Activated B cell treated with CpG ODN at 0.5 μM for 24 hours (primary cell): ENCODE measurements at regions of chr9 and their contacts with region 1.

Region 1: GRCh38 chr9:132877824-132878694 is at the start of gene AK8:
- DNase-seq: peak; percentile 87
- ATAC-seq: peak; percentile 85
- H3K4me3 Mint-ChIP-seq: peak within 1 kb of the TSS; percentile 82
- H3K27ac Mint-ChIP-seq: peak within 1 kb of the TSS; percentile 70
- H3K4me1 Mint-ChIP-seq: peaks cover 17% of the 10 kb centered on the region
- H3K27me3 Mint-ChIP-seq: no peaks in the 10 kb centered on the region
- CTCF ChIP-seq: no peak
- total RNA-seq, gene AK8: 0.93 and 1.0 TPM in 2 replicates

Region 2: GRCh38 chr9:132849185-132849706 is 28.8 kb before region 1 on chr9:
- CTCF ChIA-PET with region 1: interaction called, 4 read pairs
- POLR2A ChIA-PET with region 1: no interaction called
- intact Hi-C with region 1: loop called (anchors 1 kb)
- DNase-seq: no peak
- ATAC-seq: no peak
- H3K4me3 Mint-ChIP-seq: peak overlapping the region; percentile 68
- H3K27ac Mint-ChIP-seq: peak overlapping the region; percentile 75
- H3K4me1 Mint-ChIP-seq: peaks cover 32% of the 10 kb centered on the region
- H3K27me3 Mint-ChIP-seq: no peaks in the 10 kb centered on the region
- CTCF ChIP-seq: no peak

Region 3: DNA sequence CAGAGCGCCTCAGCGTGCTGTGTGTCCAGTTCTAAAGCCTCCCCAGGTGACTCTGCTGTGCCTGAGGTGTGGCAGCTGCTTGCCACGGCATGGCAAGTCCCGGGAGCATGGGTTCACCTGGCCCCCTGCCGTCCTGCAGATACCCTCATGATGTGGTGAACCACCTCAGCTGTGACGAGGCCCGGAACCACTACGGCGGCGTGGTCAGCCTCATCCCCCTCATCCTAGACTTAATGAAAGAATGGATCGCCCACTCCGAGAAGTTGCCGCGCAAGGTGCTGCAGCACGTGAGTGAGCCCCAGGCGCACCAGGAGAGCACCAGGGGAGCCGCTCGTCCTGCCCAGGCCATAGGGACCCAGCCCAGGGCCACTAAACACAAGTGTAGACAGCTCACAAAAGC is 10.1 kb after region 1 on chr9:
- CTCF ChIA-PET with region 1: no interaction called
- POLR2A ChIA-PET with region 1: interaction called, 18 read pairs
- intact Hi-C with region 1: loop called (anchors 1 kb)
- DNase-seq: no peak
- ATAC-seq: peak; percentile 30
- H3K4me3 Mint-ChIP-seq: no peak overlapping the region
- H3K27ac Mint-ChIP-seq: peak overlapping the region; percentile 92
- H3K4me1 Mint-ChIP-seq: peaks cover 50% of the 10 kb centered on the region
- H3K27me3 Mint-ChIP-seq: no peaks in the 10 kb centered on the region
- CTCF ChIP-seq: no peak

Region 4: GRCh38 chr9:132901856-132902831 is 24.1 kb after region 1 on chr9:
- CTCF ChIA-PET with region 1: interaction called, 13 read pairs
- POLR2A ChIA-PET with region 1: no interaction called
- intact Hi-C with region 1: no loop called
- DNase-seq: peak; percentile 57
- ATAC-seq: peak; percentile 98
- H3K4me3 Mint-ChIP-seq: no peak overlapping the region
- H3K27ac Mint-ChIP-seq: no peak overlapping the region
- H3K4me1 Mint-ChIP-seq: peaks cover 5% of the 10 kb centered on the region
- H3K27me3 Mint-ChIP-seq: no peaks in the 10 kb centered on the region
- CTCF ChIP-seq: peak; percentile 54

Region 5: GRCh38 chr9:132944302-132945185 is 66.5 kb after region 1 on chr9 and contains the start of gene TSC1:
- CTCF ChIA-PET with region 1: no interaction called
- POLR2A ChIA-PET with region 1: no interaction called
- intact Hi-C with region 1: loop called (anchors 2 kb)
- DNase-seq: peak; percentile 96
- ATAC-seq: peak; percentile 90
- H3K4me3 Mint-ChIP-seq: peak within 1 kb of the TSS; percentile 98
- H3K27ac Mint-ChIP-seq: peak within 1 kb of the TSS; percentile 100
- H3K4me1 Mint-ChIP-seq: peaks cover 29% of the 10 kb centered on the region
- H3K27me3 Mint-ChIP-seq: no peaks in the 10 kb centered on the region
- CTCF ChIP-seq: no peak
- total RNA-seq, gene TSC1: 51.7 and 61.4 TPM in 2 replicates